ENCODE measurements at regions of chr5 and their contacts with region 1.

Region 1: GRCh38 chr5:20300110-20300509 is 312.1 kb upstream of the CDH18 start:
- DNase-seq: no peak
- H3K4me3 ChIP-seq: no peak overlapping the region
- H3K27ac ChIP-seq: no peak overlapping the region
- H3K4me1 ChIP-seq: no peaks in the 10 kb centered on the region
- H3K27me3 ChIP-seq: no peaks in the 10 kb centered on the region
- CTCF ChIP-seq: no peak
- EP300 ChIP-seq: no peak
- POLR2A ChIP-seq: no peak

Region 2: GRCh38 chr5:20248118-20248517 is 52.0 kb before region 1 on chr5:
- intact Hi-C with region 1: no loop called
- DNase-seq: no peak
- H3K4me3 ChIP-seq: no peak overlapping the region
- H3K27ac ChIP-seq: no peak overlapping the region
- H3K4me1 ChIP-seq: no peaks in the 10 kb centered on the region
- H3K27me3 ChIP-seq: no peaks in the 10 kb centered on the region
- CTCF ChIP-seq: no peak
- EP300 ChIP-seq: no peak
- POLR2A ChIP-seq: no peak

Region 3: GRCh38 chr5:20286512-20286911 is 13.6 kb before region 1 on chr5:
- intact Hi-C with region 1: loop called in 1 of 4 experiments (anchors 1 kb)
- DNase-seq: no peak
- H3K4me3 ChIP-seq: no peak overlapping the region
- H3K27ac ChIP-seq: no peak overlapping the region
- H3K4me1 ChIP-seq: no peaks in the 10 kb centered on the region
- H3K27me3 ChIP-seq: no peaks in the 10 kb centered on the region
- CTCF ChIP-seq: no peak
- EP300 ChIP-seq: no peak
- POLR2A ChIP-seq: no peak

Measured in ovary (tissue), 10 donors.